Activated CD4-positive, alpha-beta T cell treated with anti-CD3 and anti-CD28 coated beads, Interleukin-2, amount 10 ng/mL, durations not matched to agents 24 days and 14 days (primary cell): ENCODE measurements at regions of chr15 and their contacts with region 1.

Region 1: GRCh38 chr15:60326824-60327654 is 70.7 kb downstream of the ANXA2 start:
- DNase-seq: peak; percentile 83
- H3K4me3 Mint-ChIP-seq: no peak overlapping the region
- H3K27ac Mint-ChIP-seq: no peak overlapping the region
- H3K4me1 Mint-ChIP-seq: peaks cover 7% of the 10 kb centered on the region
- H3K27me3 Mint-ChIP-seq: peaks cover 70% of the 10 kb centered on the region

Region 2: GRCh38 chr15:59594493-59594942 is 732.5 kb before region 1 on chr15:
- intact Hi-C with region 1: no loop called
- DNase-seq: no peak
- H3K4me3 Mint-ChIP-seq: no peak overlapping the region
- H3K27ac Mint-ChIP-seq: no peak overlapping the region
- H3K4me1 Mint-ChIP-seq: peaks cover 16% of the 10 kb centered on the region
- H3K27me3 Mint-ChIP-seq: peaks cover 5% of the 10 kb centered on the region

Region 3: DNA sequence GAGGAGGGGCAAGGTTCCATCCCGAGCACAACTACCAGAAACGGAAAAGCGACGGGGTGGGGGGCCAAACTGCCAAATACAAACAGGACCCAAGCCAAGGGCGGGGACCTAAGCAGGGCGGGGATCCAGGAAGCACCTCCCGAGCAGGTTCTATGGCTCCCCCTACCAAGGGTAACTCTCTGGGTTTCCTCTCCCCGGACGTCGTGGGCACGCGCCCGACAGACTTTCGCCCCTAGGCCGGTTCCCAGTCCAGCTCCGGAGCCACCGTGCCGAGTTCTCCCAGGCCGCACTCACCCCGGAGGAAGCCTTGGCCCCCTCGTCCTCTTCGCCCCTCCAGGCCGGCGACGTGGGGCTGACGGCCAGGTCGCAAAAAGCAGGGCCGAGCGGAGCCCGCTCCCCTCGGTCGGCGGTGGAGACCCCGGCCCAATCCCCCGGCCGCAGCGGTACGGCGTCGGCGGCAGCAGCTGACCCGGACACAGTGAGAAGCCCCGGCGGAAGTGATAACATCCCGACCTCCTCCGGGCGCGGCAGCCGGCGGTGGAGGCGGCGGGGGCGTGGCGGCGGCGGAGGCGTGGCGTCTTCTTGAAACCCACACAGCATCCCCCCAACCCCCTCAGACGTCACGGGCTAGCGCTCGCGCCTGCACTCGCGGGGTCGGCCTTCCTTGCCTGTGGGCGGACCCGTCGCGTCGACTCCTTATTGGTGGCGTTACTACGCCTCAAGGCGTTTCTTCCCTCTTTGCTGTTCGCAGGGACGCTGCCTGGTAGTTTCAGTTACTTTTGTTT is 638.0 kb before region 1 on chr15 and contains the start of gene BNIP2:
- intact Hi-C with region 1: loop called (anchors 2 kb)
- DNase-seq: peak; percentile 100
- H3K4me3 Mint-ChIP-seq: peak within 1 kb of the TSS; percentile 95
- H3K27ac Mint-ChIP-seq: peak within 1 kb of the TSS; percentile 98
- H3K4me1 Mint-ChIP-seq: peaks cover 40% of the 10 kb centered on the region
- H3K27me3 Mint-ChIP-seq: no peaks in the 10 kb centered on the region
- total RNA-seq, gene BNIP2: 55.1 and 57.2 TPM in 2 replicates

Region 4: GRCh38 chr15:59725172-59725486 is 601.9 kb before region 1 on chr15:
- intact Hi-C with region 1: loop called (anchors 1 kb)
- DNase-seq: no peak
- H3K4me3 Mint-ChIP-seq: no peak overlapping the region
- H3K27ac Mint-ChIP-seq: no peak overlapping the region
- H3K4me1 Mint-ChIP-seq: peaks cover 2% of the 10 kb centered on the region
- H3K27me3 Mint-ChIP-seq: peaks cover 23% of the 10 kb centered on the region

Region 5: GRCh38 chr15:59997070-59997701 is 329.9 kb before region 1 on chr15:
- intact Hi-C with region 1: loop called (anchors 5 kb)
- DNase-seq: peak; percentile 91
- H3K4me3 Mint-ChIP-seq: peak overlapping the region; percentile 85
- H3K27ac Mint-ChIP-seq: peak overlapping the region; percentile 71
- H3K4me1 Mint-ChIP-seq: peaks cover 45% of the 10 kb centered on the region
- H3K27me3 Mint-ChIP-seq: peaks cover 94% of the 10 kb centered on the region

Region 6: DNA sequence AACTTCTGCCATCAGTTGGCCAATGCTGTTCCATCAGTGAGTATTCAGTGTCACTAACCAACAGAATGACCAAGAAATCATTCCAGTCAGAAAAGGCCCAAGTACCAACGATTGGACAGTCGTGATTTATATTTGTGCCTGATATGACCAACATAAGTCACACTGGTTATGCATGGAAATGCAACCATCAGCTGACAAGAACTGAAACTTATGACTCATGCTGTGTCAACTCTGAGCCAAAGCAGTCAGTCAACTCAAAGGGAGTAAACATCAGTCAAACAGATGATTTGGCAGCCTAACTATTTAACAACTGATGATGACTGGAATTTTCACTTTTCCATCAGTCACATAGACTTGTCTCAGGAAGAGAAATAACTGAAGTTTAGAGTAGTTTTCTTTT is 71.6 kb before region 1 on chr15:
- intact Hi-C with region 1: no loop called
- DNase-seq: peak; percentile 77
- H3K4me3 Mint-ChIP-seq: no peak overlapping the region
- H3K27ac Mint-ChIP-seq: no peak overlapping the region
- H3K4me1 Mint-ChIP-seq: peaks cover 7% of the 10 kb centered on the region
- H3K27me3 Mint-ChIP-seq: peaks cover 66% of the 10 kb centered on the region

Region 7: GRCh38 chr15:60520825-60521368 is 193.9 kb after region 1 on chr15:
- intact Hi-C with region 1: loop called (anchors 2 kb)
- DNase-seq: peak; percentile 93
- H3K4me3 Mint-ChIP-seq: peak overlapping the region; percentile 8
- H3K27ac Mint-ChIP-seq: peak overlapping the region; percentile 59
- H3K4me1 Mint-ChIP-seq: peaks cover 36% of the 10 kb centered on the region
- H3K27me3 Mint-ChIP-seq: no peaks in the 10 kb centered on the region